CD4-positive, alpha-beta T cell (primary cell): ENCODE measurements at regions of chr16 and their contacts with region 1.

Region 1: GRCh38 chr16:4116337-4117249 is at the start of gene ADCY9:
- DNase-seq: peak; percentile 53 to 94 (median 74)
- ATAC-seq: peak; percentile 62
- H3K4me3 ChIP-seq: peak within 1 kb of the TSS; percentile 62
- H3K4me3 Mint-ChIP-seq: peak within 1 kb of the TSS; percentile 96
- H3K27ac ChIP-seq: no peak within 1 kb of the TSS
- H3K27ac Mint-ChIP-seq: peak within 1 kb of the TSS; percentile 69
- H3K4me1 ChIP-seq: peaks cover 42% of the 10 kb centered on the region
- H3K4me1 Mint-ChIP-seq: peaks cover 38% of the 10 kb centered on the region
- H3K27me3 ChIP-seq: no peaks in the 10 kb centered on the region
- H3K27me3 Mint-ChIP-seq: no peaks in the 10 kb centered on the region
- CTCF ChIP-seq: no peak
- total RNA-seq, gene ADCY9: 7.1 to 7.4 TPM

Region 2: DNA sequence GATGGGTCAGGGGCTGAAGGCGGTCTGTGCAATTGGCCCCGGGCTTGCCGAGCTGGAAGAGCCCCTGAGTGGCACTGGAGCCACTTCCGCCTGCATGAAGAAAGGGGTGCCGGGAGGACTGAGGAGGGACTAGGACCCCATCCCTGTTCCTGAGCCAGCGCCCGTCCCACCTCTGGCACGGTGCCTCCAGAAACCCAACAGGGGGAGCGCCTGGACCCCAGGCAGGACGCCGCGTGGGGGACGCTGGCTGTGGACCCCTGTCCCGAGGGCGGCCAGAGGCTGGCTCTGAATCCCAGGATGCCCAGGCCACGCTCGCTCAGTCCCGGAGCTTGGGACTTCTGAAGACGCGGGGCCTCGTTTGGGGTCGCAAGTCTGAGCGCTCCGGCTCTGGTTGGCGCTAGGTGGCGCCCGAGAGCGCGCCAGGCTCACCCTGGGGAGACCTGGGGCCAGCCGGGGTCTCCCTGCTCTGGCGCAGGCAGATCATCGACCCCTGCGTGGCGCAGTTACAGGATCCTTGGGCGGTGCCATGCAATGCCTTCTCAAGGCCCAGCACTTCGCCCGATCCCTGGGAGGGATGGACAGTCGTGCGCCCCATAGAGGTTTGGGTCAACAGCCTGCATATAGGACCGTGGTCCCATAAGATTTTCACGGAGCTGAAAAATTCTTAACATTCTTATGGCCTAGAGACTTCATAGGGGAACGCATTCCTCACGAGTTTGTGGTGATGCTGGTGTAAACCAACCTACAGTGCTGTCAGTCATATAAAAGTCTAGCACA is 177.6 kb before region 1 on chr16:
- CTCF ChIA-PET with region 1: no interaction called
- POLR2A ChIA-PET with region 1: no interaction called
- intact Hi-C with region 1: loop called in 1 of 2 experiments (anchors 10 kb)
- DNase-seq: peak; percentile 42 to 82 (median 61)
- ATAC-seq: peak; percentile 84
- H3K4me3 ChIP-seq: peak overlapping the region; percentile 33
- H3K4me3 Mint-ChIP-seq: no peak overlapping the region
- H3K27ac ChIP-seq: no peak overlapping the region
- H3K27ac Mint-ChIP-seq: no peak overlapping the region
- H3K4me1 ChIP-seq: peaks cover 11% of the 10 kb centered on the region
- H3K4me1 Mint-ChIP-seq: no peaks in the 10 kb centered on the region
- H3K27me3 ChIP-seq: peaks cover 0 to 6% of the 10 kb centered on the region in 2 experiments
- H3K27me3 Mint-ChIP-seq: peaks cover 3% of the 10 kb centered on the region
- CTCF ChIP-seq: peak; percentile 96

Region 3: GRCh38 chr16:3950343-3951193 is 166.0 kb before region 1 on chr16:
- CTCF ChIA-PET with region 1: no interaction called
- POLR2A ChIA-PET with region 1: no interaction called
- intact Hi-C with region 1: no loop called
- DNase-seq: no peak
- ATAC-seq: no peak
- H3K4me3 ChIP-seq: no peak overlapping the region
- H3K4me3 Mint-ChIP-seq: no peak overlapping the region
- H3K27ac ChIP-seq: no peak overlapping the region
- H3K27ac Mint-ChIP-seq: no peak overlapping the region
- H3K4me1 ChIP-seq: no peaks in the 10 kb centered on the region
- H3K4me1 Mint-ChIP-seq: no peaks in the 10 kb centered on the region
- H3K27me3 ChIP-seq: peaks cover 6 to 28% of the 10 kb centered on the region in 2 experiments
- H3K27me3 Mint-ChIP-seq: peaks cover 38% of the 10 kb centered on the region
- CTCF ChIP-seq: no peak

Region 4: GRCh38 chr16:4183237-4184036 is 66.8 kb after region 1 on chr16:
- CTCF ChIA-PET with region 1: no interaction called
- POLR2A ChIA-PET with region 1: no interaction called
- intact Hi-C with region 1: loop called in 1 of 2 experiments (anchors 2 kb)
- DNase-seq: peak; percentile 48 to 91 (median 81)
- ATAC-seq: peak; percentile 83
- H3K4me3 ChIP-seq: peak overlapping the region; percentile 64
- H3K4me3 Mint-ChIP-seq: peak overlapping the region; percentile 80
- H3K27ac ChIP-seq: no peak overlapping the region
- H3K27ac Mint-ChIP-seq: no peak overlapping the region
- H3K4me1 ChIP-seq: peaks cover 17% of the 10 kb centered on the region
- H3K4me1 Mint-ChIP-seq: peaks cover 9% of the 10 kb centered on the region
- H3K27me3 ChIP-seq: no peaks in the 10 kb centered on the region
- H3K27me3 Mint-ChIP-seq: no peaks in the 10 kb centered on the region
- CTCF ChIP-seq: no peak

Region 5: DNA sequence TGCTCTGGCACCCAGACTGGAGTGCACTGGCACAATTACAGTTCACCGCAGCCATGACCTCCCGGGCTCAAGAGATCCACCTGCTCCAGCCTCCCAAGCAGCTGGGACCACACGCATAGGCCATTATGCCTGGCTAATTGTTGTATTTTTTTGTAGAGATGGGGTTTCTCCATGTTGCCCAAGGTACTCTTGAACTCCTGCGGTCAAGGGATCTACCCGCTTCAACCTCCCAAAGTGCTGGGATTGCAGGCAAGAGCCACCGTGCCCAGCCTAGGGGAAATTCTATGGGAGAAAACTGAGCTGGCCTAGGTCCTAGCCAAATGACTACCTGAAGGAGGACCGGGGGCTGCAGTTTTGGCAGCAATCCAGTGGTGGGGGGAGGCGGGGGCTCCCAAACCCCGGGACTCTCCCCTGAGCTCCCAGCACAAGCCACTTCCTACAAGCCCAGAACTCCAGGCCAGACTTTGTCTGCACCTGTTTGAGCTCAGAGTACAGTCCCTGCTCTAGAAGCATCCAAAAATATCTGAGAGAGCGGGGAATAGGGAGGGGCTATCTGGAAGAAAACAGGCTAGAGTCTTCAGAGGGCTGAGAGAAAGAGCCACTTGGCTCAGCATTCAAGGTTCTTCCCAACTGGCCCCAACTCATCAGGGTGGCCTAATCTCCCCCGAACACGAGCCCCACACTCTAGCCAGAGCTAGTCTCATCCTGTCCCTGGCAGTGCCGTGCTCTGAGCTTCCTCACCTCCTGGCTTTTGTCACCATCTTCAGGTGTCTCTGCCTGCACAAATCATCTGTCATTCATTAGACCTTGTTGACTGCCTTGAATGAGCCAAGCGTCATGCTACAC is 116.2 kb after region 1 on chr16:
- CTCF ChIA-PET with region 1: no interaction called
- POLR2A ChIA-PET with region 1: no interaction called
- intact Hi-C with region 1: no loop called
- DNase-seq: no peak
- ATAC-seq: no peak
- H3K4me3 ChIP-seq: no peak overlapping the region
- H3K4me3 Mint-ChIP-seq: no peak overlapping the region
- H3K27ac ChIP-seq: no peak overlapping the region
- H3K27ac Mint-ChIP-seq: no peak overlapping the region
- H3K4me1 ChIP-seq: no peaks in the 10 kb centered on the region
- H3K4me1 Mint-ChIP-seq: no peaks in the 10 kb centered on the region
- H3K27me3 ChIP-seq: no peaks in the 10 kb centered on the region
- H3K27me3 Mint-ChIP-seq: peaks cover 16% of the 10 kb centered on the region
- CTCF ChIP-seq: no peak